Breast epithelium (tissue), 4 donors: ENCODE measurements at regions of chr14 and their contacts with region 1.

Region 1: GRCh38 chr14:91193069-91193468 is 51.4 kb downstream of the GPR68 start:
- DNase-seq: no peak
- H3K4me3 ChIP-seq: no peak overlapping the region
- H3K27ac ChIP-seq: no peak overlapping the region
- H3K4me1 ChIP-seq: no peaks in the 10 kb centered on the region
- H3K27me3 ChIP-seq: no peaks in the 10 kb centered on the region
- CTCF ChIP-seq: no peak
- POLR2A ChIP-seq: no peak

Region 2: DNA sequence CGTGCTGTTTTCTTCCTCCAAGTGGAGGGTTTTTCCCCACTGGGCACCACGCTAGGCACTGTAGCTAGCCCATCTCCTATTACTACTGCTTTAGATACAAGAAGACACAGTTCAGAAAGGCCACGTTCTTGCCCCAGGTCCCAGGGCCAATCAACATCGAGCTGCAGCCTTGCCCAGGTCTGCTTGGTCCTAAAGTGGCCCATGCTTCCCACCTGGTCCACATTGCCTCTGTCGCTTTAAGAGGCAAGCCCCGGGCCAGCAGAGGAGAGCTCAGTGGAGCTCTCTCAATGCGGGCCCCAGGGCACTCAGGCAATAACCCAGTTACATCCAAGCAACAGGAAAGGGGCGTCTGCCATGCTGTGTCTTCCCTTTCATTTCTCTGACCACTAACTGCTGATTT is 648.1 kb before region 1 on chr14:
- intact Hi-C with region 1: loop called (anchors 5 kb)
- DNase-seq: no peak
- H3K4me3 ChIP-seq: no peak overlapping the region
- H3K27ac ChIP-seq: no peak overlapping the region
- H3K4me1 ChIP-seq: no peaks in the 10 kb centered on the region
- H3K27me3 ChIP-seq: no peaks in the 10 kb centered on the region
- CTCF ChIP-seq: no peak
- POLR2A ChIP-seq: no peak

Region 3: GRCh38 chr14:91164685-91165084 is 28.4 kb before region 1 on chr14:
- intact Hi-C with region 1: no loop called
- DNase-seq: peak; percentile 82 to 84
- H3K4me3 ChIP-seq: no peak overlapping the region
- H3K27ac ChIP-seq: peak overlapping the region; percentile 22 to 45
- H3K4me1 ChIP-seq: peaks cover 0 to 8% of the 10 kb centered on the region in 2 donors
- H3K27me3 ChIP-seq: no peaks in the 10 kb centered on the region
- CTCF ChIP-seq: no peak
- POLR2A ChIP-seq: no peak